Astrocyte of the cerebellum (primary cell): ENCODE measurements at regions of chr18 and their contacts with region 1.

Region 1: GRCh38 chr18:55880617-55881016 is 292.6 kb upstream of the TCF4 start:
- DNase-seq: no peak
- H3K4me3 ChIP-seq: no peak overlapping the region
- CTCF ChIP-seq: no peak

Region 2: GRCh38 chr18:55932675-55933074 is 52.1 kb after region 1 on chr18:
- in situ Hi-C with region 1: loop called (anchors 5 kb)
- DNase-seq: no peak
- H3K4me3 ChIP-seq: no peak overlapping the region
- CTCF ChIP-seq: no peak

Region 3: DNA sequence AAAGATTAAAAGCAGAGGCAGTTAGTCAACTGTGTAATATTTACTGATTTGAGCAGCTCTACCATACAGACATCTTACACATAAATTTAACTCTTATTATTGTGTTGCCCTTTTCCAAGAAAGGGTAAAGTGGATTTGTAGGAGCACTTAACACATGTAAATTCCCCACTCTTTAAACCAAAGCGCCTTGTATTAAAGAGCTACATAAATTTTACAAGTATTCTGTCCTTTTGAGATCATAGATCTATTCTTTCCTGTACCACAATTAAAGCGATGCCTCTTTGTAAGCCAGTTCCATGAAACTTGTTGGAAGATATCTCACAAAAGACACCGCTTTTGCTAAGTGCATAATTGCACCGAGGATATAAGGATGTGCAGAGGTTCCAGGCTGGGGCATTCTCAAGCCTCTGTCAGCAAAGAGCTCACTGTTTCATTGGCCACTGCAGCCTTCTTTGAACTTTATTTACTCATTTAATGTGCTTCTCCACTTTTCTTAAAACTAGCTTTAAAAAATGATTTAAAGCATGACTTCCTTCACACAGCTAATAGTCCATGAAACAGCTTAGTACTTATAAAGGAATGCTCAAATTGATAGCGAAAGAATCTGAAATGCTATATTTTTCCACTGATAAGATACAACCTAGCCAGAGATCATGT is 227.3 kb after region 1 on chr18:
- in situ Hi-C with region 1: no loop called
- DNase-seq: no peak
- H3K4me3 ChIP-seq: no peak overlapping the region
- CTCF ChIP-seq: no peak